MCF 10A (cell line): ENCODE measurements at regions of chr14 and their contacts with region 1.

Region 1: DNA sequence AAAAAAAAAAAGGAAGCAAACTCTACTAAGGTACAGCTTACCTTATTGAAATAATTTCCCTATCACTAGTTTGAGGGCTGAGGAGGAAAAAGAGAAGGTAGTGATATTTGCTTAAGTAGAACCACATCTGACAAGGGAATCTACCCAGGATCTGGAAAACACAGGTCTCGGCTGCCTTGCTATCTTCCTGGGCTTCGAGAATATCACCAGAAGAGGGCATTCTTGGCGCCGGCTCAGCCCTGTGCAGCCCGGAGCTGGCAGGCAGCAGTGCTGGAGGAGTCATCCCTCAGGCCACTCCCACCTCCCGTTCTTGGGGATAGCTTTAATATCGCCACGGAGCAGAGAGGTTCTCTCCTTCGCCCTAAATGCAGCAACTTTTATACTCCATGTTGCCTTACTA is 1181.2 kb downstream of the VRK1 start:
- DNase-seq: peak; percentile 88
- H3K4me3 Mint-ChIP-seq: peak overlapping the region; percentile 68
- H3K27ac Mint-ChIP-seq: peak overlapping the region; percentile 75
- H3K4me1 Mint-ChIP-seq: peaks cover 31% of the 10 kb centered on the region
- H3K27me3 Mint-ChIP-seq: no peaks in the 10 kb centered on the region
- CTCF ChIP-seq: peak; percentile 58

Region 2: DNA sequence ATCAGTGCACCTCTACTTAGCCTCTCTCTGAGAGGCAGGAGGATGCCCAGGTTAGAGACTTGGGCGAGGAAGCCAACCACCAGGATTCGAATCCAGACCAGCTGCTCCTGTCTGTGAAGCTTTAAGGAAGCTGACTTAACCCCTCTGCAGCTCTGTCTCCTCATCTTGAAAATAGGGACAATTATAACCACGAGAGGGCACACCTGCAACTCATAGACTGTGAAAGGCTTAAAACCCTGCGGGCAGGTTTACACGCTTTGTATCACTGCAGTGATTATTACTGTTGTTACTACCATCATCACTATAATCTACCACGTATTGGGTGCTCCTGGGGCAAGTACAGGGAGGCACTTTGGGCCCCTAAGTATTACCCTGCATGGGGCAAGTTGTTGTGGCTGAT is 801.3 kb before region 1 on chr14:
- CTCF ChIA-PET with region 1: no interaction called
- POLR2A ChIA-PET with region 1: no interaction called
- intact Hi-C with region 1: loop called (anchors 5 kb)
- DNase-seq: peak; percentile 77
- H3K4me3 Mint-ChIP-seq: no peak overlapping the region
- H3K27ac Mint-ChIP-seq: no peak overlapping the region
- H3K4me1 Mint-ChIP-seq: peaks cover 31% of the 10 kb centered on the region
- H3K27me3 Mint-ChIP-seq: peaks cover 9% of the 10 kb centered on the region
- CTCF ChIP-seq: peak; percentile 49

Region 3: GRCh38 chr14:97916669-97917568 is 61.4 kb before region 1 on chr14:
- CTCF ChIA-PET with region 1: interaction called, 3 read pairs
- POLR2A ChIA-PET with region 1: interaction called, 16 read pairs
- intact Hi-C with region 1: no loop called
- DNase-seq: peak; percentile 94
- H3K4me3 Mint-ChIP-seq: no peak overlapping the region
- H3K27ac Mint-ChIP-seq: peak overlapping the region; percentile 43
- H3K4me1 Mint-ChIP-seq: peaks cover 17% of the 10 kb centered on the region
- H3K27me3 Mint-ChIP-seq: no peaks in the 10 kb centered on the region
- CTCF ChIP-seq: no peak

Region 4: DNA sequence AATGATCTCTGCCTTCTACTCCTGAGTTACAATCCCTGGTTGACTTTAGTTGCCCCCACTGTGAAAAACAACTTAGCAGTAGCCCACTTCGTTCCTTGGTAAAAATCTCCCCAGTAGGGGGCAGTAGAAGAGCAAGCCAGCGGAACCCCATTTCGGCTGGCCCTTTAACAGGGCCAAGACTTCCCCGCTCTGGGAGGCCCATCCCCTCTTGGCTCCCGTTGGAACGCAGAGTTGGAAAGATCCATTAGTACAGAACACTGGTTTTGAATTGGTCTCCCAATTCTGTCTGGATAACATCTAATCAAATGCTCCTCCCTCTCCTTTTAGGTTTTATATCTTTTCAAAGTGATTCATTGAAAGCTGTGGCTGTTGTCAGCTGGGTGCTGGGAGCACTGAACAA is 160.3 kb after region 1 on chr14:
- CTCF ChIA-PET with region 1: interaction called, 5 read pairs
- POLR2A ChIA-PET with region 1: interaction called, 3 read pairs
- intact Hi-C with region 1: loop called (anchors 5 kb)
- DNase-seq: peak; percentile 45
- H3K4me3 Mint-ChIP-seq: no peak overlapping the region
- H3K27ac Mint-ChIP-seq: no peak overlapping the region
- H3K4me1 Mint-ChIP-seq: peaks cover 12% of the 10 kb centered on the region
- H3K27me3 Mint-ChIP-seq: no peaks in the 10 kb centered on the region
- CTCF ChIP-seq: peak; percentile 46

Region 5: DNA sequence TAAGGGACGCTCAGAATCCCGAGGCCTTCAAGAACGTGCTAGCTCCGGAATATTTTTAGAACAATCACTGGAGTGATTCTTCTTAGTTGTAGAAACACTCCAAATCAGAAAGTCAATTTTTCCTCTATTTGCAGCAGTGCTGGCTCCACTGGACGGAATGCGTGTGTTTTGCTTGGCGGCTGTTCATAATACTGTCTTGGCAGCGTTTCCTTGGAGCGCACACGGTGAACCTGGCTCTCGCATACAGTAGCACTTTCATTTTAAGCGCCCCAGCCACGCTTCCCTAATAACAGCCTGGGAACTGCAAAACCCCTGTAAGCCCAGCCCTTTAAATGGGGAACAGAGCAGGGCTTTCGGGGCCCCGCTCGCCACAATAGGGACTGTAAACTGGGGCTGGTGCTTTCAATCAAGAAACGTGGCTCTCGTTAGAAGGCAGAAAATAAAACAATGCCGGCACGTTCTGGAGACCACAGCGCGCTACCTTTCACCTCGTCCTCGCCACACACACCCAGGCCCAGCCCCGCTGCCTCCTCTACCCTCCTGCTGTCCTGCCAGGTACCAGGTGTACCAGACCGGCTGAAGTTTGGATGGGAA is 1213.8 kb after region 1 on chr14:
- CTCF ChIA-PET with region 1: no interaction called
- POLR2A ChIA-PET with region 1: no interaction called
- intact Hi-C with region 1: loop called (anchors 5 kb)
- DNase-seq: peak; percentile 85
- H3K4me3 Mint-ChIP-seq: peak overlapping the region; percentile 72
- H3K27ac Mint-ChIP-seq: peak overlapping the region; percentile 57
- H3K4me1 Mint-ChIP-seq: peaks cover 13% of the 10 kb centered on the region
- H3K27me3 Mint-ChIP-seq: no peaks in the 10 kb centered on the region
- CTCF ChIP-seq: no peak

Region 6: GRCh38 chr14:99271951-99272631 is 1293.8 kb after region 1 on chr14 and contains the start of gene BCL11B:
- CTCF ChIA-PET with region 1: interaction called, 35 read pairs
- POLR2A ChIA-PET with region 1: interaction called, 13 read pairs
- intact Hi-C with region 1: loop called (anchors 2 kb)
- DNase-seq: peak; percentile 86
- H3K4me3 Mint-ChIP-seq: peak within 1 kb of the TSS; percentile 72
- H3K27ac Mint-ChIP-seq: peak within 1 kb of the TSS; percentile 36
- H3K4me1 Mint-ChIP-seq: peaks cover 14% of the 10 kb centered on the region
- H3K27me3 Mint-ChIP-seq: peaks cover 19% of the 10 kb centered on the region
- CTCF ChIP-seq: peak; percentile 50
- total RNA-seq, gene BCL11B: 0.84 and 1.4 TPM in 2 replicates